Activated CD4-positive, alpha-beta memory T cell treated with anti-CD3 and anti-CD28 coated beads for 36 hours (primary cell): ENCODE measurements at regions of chr17 and their contacts with region 1.

Region 1: DNA sequence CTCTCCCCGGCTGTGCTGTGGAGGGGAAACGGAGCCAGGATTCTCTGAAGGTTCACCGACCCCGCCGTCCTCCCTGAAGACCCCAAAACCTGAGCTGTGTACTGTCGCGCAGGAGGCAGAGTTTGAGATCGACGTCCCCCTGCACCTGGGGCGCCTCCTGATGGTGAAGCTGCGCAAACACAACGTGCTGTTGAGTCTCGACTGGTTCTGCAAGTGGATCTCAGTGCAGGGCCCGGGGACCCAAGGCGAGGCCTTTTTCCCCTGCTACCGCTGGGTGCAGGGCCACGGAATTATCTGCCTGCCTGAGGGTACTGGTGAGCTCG is 62.6 kb upstream of the TEKT1 start:
- DNase-seq: peak; percentile 59
- H3K4me3 Mint-ChIP-seq: no peak overlapping the region
- H3K27ac Mint-ChIP-seq: no peak overlapping the region
- H3K4me1 Mint-ChIP-seq: peaks cover 3% of the 10 kb centered on the region
- H3K27me3 Mint-ChIP-seq: peaks cover 62% of the 10 kb centered on the region

Region 2: DNA sequence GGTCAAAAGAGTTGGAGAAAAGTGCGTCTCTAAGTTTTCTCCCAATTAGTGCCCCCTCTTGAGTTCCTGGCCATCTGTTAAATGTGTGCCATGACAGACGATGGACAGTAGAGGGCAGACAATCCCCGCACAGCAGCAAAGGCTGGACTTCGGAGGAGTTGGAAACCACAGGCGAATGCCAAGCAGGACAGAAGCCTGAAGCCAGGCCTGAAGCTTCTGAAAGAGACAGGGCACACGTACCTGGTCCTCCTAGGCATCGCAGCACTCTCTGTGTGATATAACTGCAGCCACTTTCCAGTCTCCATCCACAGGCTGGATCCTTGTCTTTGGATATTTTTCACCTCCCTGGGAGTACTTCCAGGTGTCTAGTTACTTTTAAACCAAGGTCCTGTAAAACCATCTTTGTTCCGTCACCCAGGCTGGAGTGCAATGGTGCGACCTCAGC is 228.1 kb before region 1 on chr17:
- CTCF ChIA-PET with region 1: interaction called, 10 read pairs
- POLR2A ChIA-PET with region 1: no interaction called
- intact Hi-C with region 1: loop called (anchors 10 kb)
- DNase-seq: peak; percentile 65
- H3K4me3 Mint-ChIP-seq: no peak overlapping the region
- H3K27ac Mint-ChIP-seq: no peak overlapping the region
- H3K4me1 Mint-ChIP-seq: peaks cover 7% of the 10 kb centered on the region
- H3K27me3 Mint-ChIP-seq: no peaks in the 10 kb centered on the region